PC-3 (cell line): ENCODE measurements at regions of chr7 and their contacts with region 1.

Region 1: DNA sequence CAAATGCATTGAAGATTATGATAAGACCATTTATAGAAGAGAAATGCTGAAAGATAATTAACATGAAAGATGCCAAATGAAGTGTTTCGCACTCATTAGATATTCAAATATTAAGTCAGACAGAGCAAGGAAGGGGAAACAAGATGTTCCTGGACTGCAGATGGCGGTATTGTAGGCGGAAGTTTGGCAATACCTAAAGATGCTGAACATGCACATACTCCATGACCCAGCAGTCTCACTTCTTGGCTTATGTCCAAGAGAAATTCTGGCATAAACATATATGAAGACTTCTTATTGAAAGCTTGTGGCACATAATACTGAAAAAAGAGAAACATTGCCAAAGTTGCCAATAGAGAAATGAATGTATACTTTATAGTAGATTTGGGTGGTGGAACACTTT is 325.4 kb upstream of the SEMA3C start:
- DNase-seq: peak; percentile 16
- ATAC-seq: no peak
- H3K4me3 ChIP-seq: no peak overlapping the region
- H3K27ac ChIP-seq: no peak overlapping the region
- H3K4me1 ChIP-seq: peaks cover 12% of the 10 kb centered on the region
- H3K27me3 ChIP-seq: no peaks in the 10 kb centered on the region
- CTCF ChIP-seq: peak; percentile 43; the same call in 1 of the 2 replicates

Region 2: DNA sequence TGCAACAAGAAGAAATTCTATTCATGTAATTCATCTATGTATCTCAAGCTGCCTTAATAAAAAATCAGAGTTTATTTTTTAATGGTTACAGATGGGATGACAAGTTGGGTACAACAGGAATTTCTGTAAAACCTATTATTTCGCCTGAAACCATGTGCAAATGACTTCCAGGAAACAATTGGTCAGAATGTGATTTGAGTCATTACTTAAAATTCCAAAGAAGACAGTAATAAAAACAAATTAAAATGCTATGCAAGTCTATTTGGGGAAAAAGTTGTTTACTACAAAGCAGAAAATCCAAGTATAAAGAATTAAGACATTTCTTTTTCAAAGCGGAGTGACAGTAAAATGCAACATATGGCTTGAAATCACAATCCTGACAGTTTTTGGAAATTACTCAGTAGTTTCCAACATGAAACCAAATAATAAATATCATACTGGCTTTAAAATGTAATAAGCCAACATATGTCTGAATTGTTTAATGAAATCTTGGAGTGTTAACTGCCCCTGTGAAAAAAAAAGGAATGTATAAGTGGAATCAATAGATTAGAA is 283.9 kb before region 1 on chr7:
- CTCF ChIA-PET with region 1: no interaction called
- POLR2A ChIA-PET with region 1: no interaction called
- intact Hi-C with region 1: no loop called
- DNase-seq: peak; percentile 19
- ATAC-seq: no peak
- H3K4me3 ChIP-seq: no peak overlapping the region
- H3K27ac ChIP-seq: no peak overlapping the region
- H3K4me1 ChIP-seq: no peaks in the 10 kb centered on the region
- H3K27me3 ChIP-seq: no peaks in the 10 kb centered on the region
- CTCF ChIP-seq: no peak

Region 3: GRCh38 chr7:81159387-81159786 is 84.8 kb before region 1 on chr7:
- CTCF ChIA-PET with region 1: no interaction called
- POLR2A ChIA-PET with region 1: no interaction called
- intact Hi-C with region 1: loop called (anchors 5 kb)
- DNase-seq: peak; percentile 84
- ATAC-seq: peak; percentile 67
- H3K4me3 ChIP-seq: no peak overlapping the region
- H3K27ac ChIP-seq: peak overlapping the region; percentile 64
- H3K4me1 ChIP-seq: peaks cover 27% of the 10 kb centered on the region
- H3K27me3 ChIP-seq: no peaks in the 10 kb centered on the region
- CTCF ChIP-seq: no peak